AG04449 (cell line): ENCODE measurements at regions of chr14 and their contacts with region 1.

Region 1: DNA sequence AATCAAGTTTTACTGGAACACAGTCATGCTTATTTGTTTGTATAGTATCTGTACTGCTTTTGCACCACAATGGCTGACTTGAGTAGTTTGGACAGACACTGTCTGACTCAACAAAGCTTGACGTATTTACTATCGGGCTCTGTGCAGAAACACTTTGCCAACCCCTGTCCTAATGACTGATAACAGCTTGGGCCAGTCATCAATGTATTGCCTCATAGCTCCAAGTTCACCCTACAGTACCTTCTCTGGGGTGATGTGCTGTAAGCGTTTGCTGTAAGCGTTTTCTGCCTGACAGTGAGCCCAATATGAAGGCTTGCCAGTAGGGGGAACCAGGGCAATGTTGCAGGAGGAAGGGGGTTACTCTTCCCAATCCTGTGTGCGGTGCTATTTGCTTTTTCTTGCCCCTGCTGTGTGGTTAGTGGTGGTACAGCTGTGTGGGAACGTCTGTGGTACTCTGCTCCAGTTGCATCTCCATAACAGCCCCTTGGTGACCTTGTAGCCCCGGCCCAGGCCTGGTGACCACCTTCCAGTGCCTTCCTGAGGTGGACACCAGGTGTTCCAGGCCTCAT is 5.4 kb upstream of the CCDC177 start:
- DNase-seq: peak; percentile 42
- H3K4me3 ChIP-seq: no peak overlapping the region
- CTCF ChIP-seq: peak; percentile 69

Region 2: GRCh38 chr14:69543341-69544249 is 36.5 kb before region 1 on chr14:
- CTCF ChIA-PET with region 1: interaction called, 31 read pairs
- POLR2A ChIA-PET with region 1: no interaction called
- DNase-seq: no peak
- H3K4me3 ChIP-seq: no peak overlapping the region
- CTCF ChIP-seq: no peak

Region 3: DNA sequence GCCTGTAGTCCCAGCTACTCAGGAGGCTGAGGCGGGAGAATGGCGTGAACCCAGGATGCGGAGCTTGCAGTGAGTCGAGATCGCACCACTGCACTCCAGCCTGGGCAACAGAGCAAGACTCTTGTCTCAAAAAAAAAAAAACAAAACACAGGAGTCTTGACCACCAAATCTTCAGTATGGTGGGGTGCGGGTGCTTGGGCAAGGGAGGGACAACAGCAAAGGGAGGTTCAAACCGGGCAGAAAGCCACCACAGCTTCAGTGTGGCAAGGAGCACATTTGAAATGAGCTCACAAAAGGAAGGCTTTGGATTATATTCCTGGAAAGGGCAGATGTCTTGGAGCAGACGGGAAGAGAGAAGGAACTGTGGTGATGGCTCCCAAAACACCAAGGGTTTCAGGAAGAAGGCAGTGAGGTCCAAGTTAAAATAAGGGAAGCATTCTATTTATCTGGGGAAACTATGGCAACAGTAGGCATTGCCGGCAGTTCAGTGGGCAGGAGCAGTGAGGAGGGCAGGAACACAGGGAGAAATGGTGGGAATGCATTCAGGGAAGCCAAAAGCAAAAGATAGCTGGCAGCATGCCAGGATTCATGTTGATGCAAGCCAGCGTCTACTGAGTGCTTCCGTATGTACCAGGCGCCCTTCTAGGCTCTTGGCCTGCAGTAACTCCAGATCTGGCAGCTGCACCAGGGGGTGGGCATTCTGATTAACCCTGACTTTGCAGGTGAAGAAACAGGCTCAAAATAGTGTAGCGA is 135.8 kb after region 1 on chr14:
- CTCF ChIA-PET with region 1: interaction called, 72 read pairs
- POLR2A ChIA-PET with region 1: no interaction called
- DNase-seq: peak; percentile 45
- H3K4me3 ChIP-seq: no peak overlapping the region
- CTCF ChIP-seq: no peak